ENCODE measurements at regions of chr2 and their contacts with region 1.

Region 1: GRCh38 chr2:202577250-202578183 is 57.3 kb upstream of the FAM117B start:
- DNase-seq: no peak
- ATAC-seq: no peak
- H3K4me3 ChIP-seq: no peak overlapping the region
- H3K4me3 Mint-ChIP-seq: no peak overlapping the region
- H3K27ac ChIP-seq: no peak overlapping the region
- H3K27ac Mint-ChIP-seq: no peak overlapping the region
- H3K4me1 ChIP-seq: no peaks in the 10 kb centered on the region
- H3K4me1 Mint-ChIP-seq: no peaks in the 10 kb centered on the region
- H3K27me3 ChIP-seq: no peaks in the 10 kb centered on the region
- H3K27me3 Mint-ChIP-seq: no peaks in the 10 kb centered on the region
- CTCF ChIP-seq: no peak

Region 2: GRCh38 chr2:202436626-202437025 is 140.9 kb before region 1 on chr2:
- CTCF ChIA-PET with region 1: no interaction called
- POLR2A ChIA-PET with region 1: no interaction called
- intact Hi-C with region 1: no loop called
- DNase-seq: no peak
- ATAC-seq: no peak
- H3K4me3 ChIP-seq: no peak overlapping the region
- H3K4me3 Mint-ChIP-seq: no peak overlapping the region
- H3K27ac ChIP-seq: no peak overlapping the region
- H3K27ac Mint-ChIP-seq: no peak overlapping the region
- H3K4me1 ChIP-seq: no peaks in the 10 kb centered on the region
- H3K4me1 Mint-ChIP-seq: no peaks in the 10 kb centered on the region
- H3K27me3 ChIP-seq: no peaks in the 10 kb centered on the region
- H3K27me3 Mint-ChIP-seq: no peaks in the 10 kb centered on the region
- CTCF ChIP-seq: no peak

Region 3: GRCh38 chr2:202870431-202871299 is 293.1 kb after region 1 on chr2:
- CTCF ChIA-PET with region 1: interaction called, 9 read pairs
- POLR2A ChIA-PET with region 1: interaction called, 8 read pairs
- intact Hi-C with region 1: loop called (anchors 1 to 2 kb)
- DNase-seq: peak; percentile 31 to 80 (median 63)
- ATAC-seq: peak; percentile 79
- H3K4me3 ChIP-seq: peak overlapping the region; percentile 56 to 97
- H3K4me3 Mint-ChIP-seq: peak overlapping the region; percentile 97
- H3K27ac ChIP-seq: peak overlapping the region; percentile 48 to 60
- H3K27ac Mint-ChIP-seq: peak overlapping the region; percentile 83
- H3K4me1 ChIP-seq: no peaks in the 10 kb centered on the region
- H3K4me1 Mint-ChIP-seq: peaks cover 9% of the 10 kb centered on the region
- H3K27me3 ChIP-seq: no peaks in the 10 kb centered on the region
- H3K27me3 Mint-ChIP-seq: no peaks in the 10 kb centered on the region
- CTCF ChIP-seq: peak; percentile 69

Region 4: GRCh38 chr2:203080447-203081045 is 503.0 kb after region 1 on chr2:
- CTCF ChIA-PET with region 1: no interaction called
- POLR2A ChIA-PET with region 1: no interaction called
- intact Hi-C with region 1: loop called in 1 of 2 experiments (anchors 10 kb)
- DNase-seq: no peak
- ATAC-seq: no peak
- H3K4me3 ChIP-seq: no peak overlapping the region
- H3K4me3 Mint-ChIP-seq: no peak overlapping the region
- H3K27ac ChIP-seq: no peak overlapping the region
- H3K27ac Mint-ChIP-seq: no peak overlapping the region
- H3K4me1 ChIP-seq: no peaks in the 10 kb centered on the region
- H3K4me1 Mint-ChIP-seq: no peaks in the 10 kb centered on the region
- H3K27me3 ChIP-seq: no peaks in the 10 kb centered on the region
- H3K27me3 Mint-ChIP-seq: no peaks in the 10 kb centered on the region
- CTCF ChIP-seq: no peak